ENCODE measurements at regions of chr6 and their contacts with region 1.

Region 1: DNA sequence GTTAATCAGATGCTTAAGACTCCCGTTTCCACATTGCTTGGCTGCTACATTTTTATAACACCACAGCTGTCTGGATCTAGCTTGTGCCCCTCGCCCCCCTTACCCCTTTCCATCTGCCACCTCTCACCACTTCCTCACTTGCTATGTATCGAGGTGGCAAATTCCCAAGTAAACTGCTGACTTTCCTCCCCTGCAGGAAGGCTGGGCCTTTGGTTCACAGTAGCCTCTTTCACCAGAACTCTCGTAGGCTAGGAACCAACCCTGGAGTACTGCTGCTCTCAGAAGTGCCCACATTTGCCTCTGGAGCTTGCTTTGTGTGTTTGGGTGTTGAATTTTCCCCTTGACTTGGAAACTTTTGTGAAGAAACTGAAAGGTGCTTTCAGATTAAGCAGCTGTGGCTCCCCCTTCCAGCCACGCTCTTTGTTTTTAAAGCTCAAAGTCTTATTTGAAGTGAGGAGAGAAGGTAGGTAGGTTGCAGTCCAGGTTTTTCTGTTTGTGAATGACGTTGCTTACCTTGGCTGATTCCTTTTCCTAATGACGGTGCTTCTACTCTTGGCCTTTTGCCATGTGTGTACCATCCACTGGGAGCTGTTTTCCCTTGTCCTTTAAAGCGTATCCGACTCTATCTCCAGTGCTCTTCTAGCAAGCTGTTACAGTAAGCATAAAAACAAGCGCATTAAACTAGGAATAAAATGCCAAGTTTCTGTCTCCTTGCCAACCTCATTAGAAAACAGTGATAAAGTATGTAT is 90.4 kb downstream of the CARMIL1 start:
- DNase-seq: no peak
- ATAC-seq: peak; percentile 39
- H3K4me3 ChIP-seq: peak overlapping the region; percentile 25; the same call in 1 of the 2 replicates
- H3K27ac ChIP-seq: peak overlapping the region; percentile 56
- H3K4me1 ChIP-seq: peaks cover 26% of the 10 kb centered on the region
- H3K27me3 ChIP-seq: no peaks in the 10 kb centered on the region
- CTCF ChIP-seq: no peak
- EP300 ChIP-seq: no peak
- POLR2A ChIP-seq: no peak
- RAD21 ChIP-seq: no peak

Region 2: DNA sequence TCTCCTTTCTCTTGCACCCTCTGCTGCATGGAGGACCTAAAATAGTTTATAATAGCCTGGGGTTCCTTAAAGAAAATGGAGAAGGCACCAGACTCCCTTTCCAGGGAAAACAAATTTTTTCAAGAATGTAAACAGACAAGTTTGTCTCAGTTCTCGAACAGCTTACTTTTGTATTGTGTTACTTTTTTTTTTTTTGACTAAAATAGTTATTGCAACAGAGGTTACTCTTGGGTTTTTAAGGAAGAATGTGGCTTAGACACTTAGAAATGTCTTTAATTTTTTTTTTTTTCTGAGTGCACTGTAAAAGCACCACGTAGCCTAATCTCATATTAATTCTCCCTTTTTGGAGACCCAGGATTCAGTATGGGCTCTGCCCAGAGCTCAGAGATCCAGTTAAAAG is 239.1 kb before region 1 on chr6:
- CTCF ChIA-PET with region 1: no interaction called
- POLR2A ChIA-PET with region 1: no interaction called
- RAD21 ChIA-PET with region 1: no interaction called
- SMC1A ChIA-PET with region 1: no interaction called
- in situ Hi-C with region 1: no loop called
- intact Hi-C with region 1: no loop called
- DNase-seq: no peak
- ATAC-seq: no peak
- H3K4me3 ChIP-seq: no peak overlapping the region
- H3K27ac ChIP-seq: no peak overlapping the region
- H3K4me1 ChIP-seq: no peaks in the 10 kb centered on the region
- H3K27me3 ChIP-seq: no peaks in the 10 kb centered on the region
- CTCF ChIP-seq: no peak
- EP300 ChIP-seq: no peak
- POLR2A ChIP-seq: no peak
- RAD21 ChIP-seq: no peak

Region 3: GRCh38 chr6:25330796-25331685 is 38.6 kb before region 1 on chr6:
- CTCF ChIA-PET with region 1: interaction called, 4 read pairs
- POLR2A ChIA-PET with region 1: interaction called, 10 read pairs
- RAD21 ChIA-PET with region 1: interaction called, 21 read pairs
- SMC1A ChIA-PET with region 1: interaction called, 29 read pairs
- in situ Hi-C with region 1: no loop called
- intact Hi-C with region 1: no loop called
- DNase-seq: no peak
- ATAC-seq: no peak
- H3K4me3 ChIP-seq: no peak overlapping the region
- H3K27ac ChIP-seq: no peak overlapping the region
- H3K4me1 ChIP-seq: peaks cover 7% of the 10 kb centered on the region
- H3K27me3 ChIP-seq: no peaks in the 10 kb centered on the region
- CTCF ChIP-seq: no peak
- EP300 ChIP-seq: no peak
- POLR2A ChIP-seq: no peak
- RAD21 ChIP-seq: no peak

Region 4: GRCh38 chr6:25354078-25354932 is 15.3 kb before region 1 on chr6:
- CTCF ChIA-PET with region 1: interaction called, 10 read pairs
- POLR2A ChIA-PET with region 1: interaction called, 10 read pairs
- RAD21 ChIA-PET with region 1: interaction called, 11 read pairs
- SMC1A ChIA-PET with region 1: interaction called, 35 read pairs
- in situ Hi-C with region 1: no loop called
- intact Hi-C with region 1: no loop called
- DNase-seq: no peak
- ATAC-seq: no peak
- H3K4me3 ChIP-seq: no peak overlapping the region
- H3K27ac ChIP-seq: no peak overlapping the region
- H3K4me1 ChIP-seq: no peaks in the 10 kb centered on the region
- H3K27me3 ChIP-seq: no peaks in the 10 kb centered on the region
- CTCF ChIP-seq: no peak
- EP300 ChIP-seq: no peak
- POLR2A ChIP-seq: no peak
- RAD21 ChIP-seq: no peak

Region 5: DNA sequence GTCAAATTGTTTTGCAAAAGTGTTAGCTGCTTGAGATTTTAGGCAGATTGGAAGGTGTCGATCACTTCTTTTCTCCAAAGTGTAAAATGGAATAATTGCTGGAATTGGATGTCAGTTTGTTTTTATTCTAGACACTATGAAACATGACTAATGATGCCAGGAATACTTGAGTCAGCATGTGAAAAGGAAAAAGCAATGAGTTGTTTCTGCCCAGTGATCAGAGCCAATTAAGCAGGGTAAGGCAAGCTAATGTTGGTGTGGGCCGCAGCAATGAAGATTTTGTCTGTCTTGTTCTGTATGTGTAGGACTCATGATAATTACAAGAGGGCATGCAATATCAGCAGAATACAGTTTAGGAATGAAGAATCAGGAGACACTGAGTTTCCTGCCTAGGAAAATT is 19.9 kb after region 1 on chr6:
- CTCF ChIA-PET with region 1: interaction called, 6 read pairs
- POLR2A ChIA-PET with region 1: interaction called, 7 read pairs
- RAD21 ChIA-PET with region 1: interaction called, 33 read pairs
- SMC1A ChIA-PET with region 1: interaction called, 67 read pairs
- in situ Hi-C with region 1: no loop called
- intact Hi-C with region 1: loop called (anchors 2 kb)
- DNase-seq: no peak
- ATAC-seq: peak; percentile 19; the same call in 1 of the 3 replicates
- H3K4me3 ChIP-seq: no peak overlapping the region
- H3K27ac ChIP-seq: no peak overlapping the region
- H3K4me1 ChIP-seq: peaks cover 11% of the 10 kb centered on the region
- H3K27me3 ChIP-seq: no peaks in the 10 kb centered on the region
- CTCF ChIP-seq: no peak
- EP300 ChIP-seq: no peak
- POLR2A ChIP-seq: no peak
- RAD21 ChIP-seq: no peak

Region 6: GRCh38 chr6:25413207-25413905 is 43.7 kb after region 1 on chr6:
- CTCF ChIA-PET with region 1: interaction called, 4 read pairs
- POLR2A ChIA-PET with region 1: interaction called, 7 read pairs
- RAD21 ChIA-PET with region 1: interaction called, 5 read pairs
- SMC1A ChIA-PET with region 1: interaction called, 13 read pairs
- in situ Hi-C with region 1: no loop called
- intact Hi-C with region 1: no loop called
- DNase-seq: no peak
- ATAC-seq: no peak
- H3K4me3 ChIP-seq: no peak overlapping the region
- H3K27ac ChIP-seq: no peak overlapping the region
- H3K4me1 ChIP-seq: no peaks in the 10 kb centered on the region
- H3K27me3 ChIP-seq: no peaks in the 10 kb centered on the region
- CTCF ChIP-seq: no peak
- EP300 ChIP-seq: no peak
- POLR2A ChIP-seq: no peak
- RAD21 ChIP-seq: no peak